CD4-positive, alpha-beta T cell (primary cell): ENCODE measurements at regions of chr11 and their contacts with region 1.

Region 1: GRCh38 chr11:13462901-13463778 is at the start of gene BTBD10:
- DNase-seq: peak; percentile 84 to 98 (median 90)
- ATAC-seq: peak; percentile 98
- H3K4me3 ChIP-seq: peak within 1 kb of the TSS; percentile 77
- H3K4me3 Mint-ChIP-seq: peak within 1 kb of the TSS; percentile 100
- H3K27ac ChIP-seq: peak within 1 kb of the TSS; percentile 82 to 92
- H3K27ac Mint-ChIP-seq: peak within 1 kb of the TSS; percentile 99
- H3K4me1 ChIP-seq: peaks cover 15% of the 10 kb centered on the region
- H3K4me1 Mint-ChIP-seq: peaks cover 54% of the 10 kb centered on the region
- H3K27me3 ChIP-seq: no peaks in the 10 kb centered on the region
- H3K27me3 Mint-ChIP-seq: no peaks in the 10 kb centered on the region
- CTCF ChIP-seq: no peak
- total RNA-seq, gene BTBD10: 13.3 to 14.8 TPM

Region 2: DNA sequence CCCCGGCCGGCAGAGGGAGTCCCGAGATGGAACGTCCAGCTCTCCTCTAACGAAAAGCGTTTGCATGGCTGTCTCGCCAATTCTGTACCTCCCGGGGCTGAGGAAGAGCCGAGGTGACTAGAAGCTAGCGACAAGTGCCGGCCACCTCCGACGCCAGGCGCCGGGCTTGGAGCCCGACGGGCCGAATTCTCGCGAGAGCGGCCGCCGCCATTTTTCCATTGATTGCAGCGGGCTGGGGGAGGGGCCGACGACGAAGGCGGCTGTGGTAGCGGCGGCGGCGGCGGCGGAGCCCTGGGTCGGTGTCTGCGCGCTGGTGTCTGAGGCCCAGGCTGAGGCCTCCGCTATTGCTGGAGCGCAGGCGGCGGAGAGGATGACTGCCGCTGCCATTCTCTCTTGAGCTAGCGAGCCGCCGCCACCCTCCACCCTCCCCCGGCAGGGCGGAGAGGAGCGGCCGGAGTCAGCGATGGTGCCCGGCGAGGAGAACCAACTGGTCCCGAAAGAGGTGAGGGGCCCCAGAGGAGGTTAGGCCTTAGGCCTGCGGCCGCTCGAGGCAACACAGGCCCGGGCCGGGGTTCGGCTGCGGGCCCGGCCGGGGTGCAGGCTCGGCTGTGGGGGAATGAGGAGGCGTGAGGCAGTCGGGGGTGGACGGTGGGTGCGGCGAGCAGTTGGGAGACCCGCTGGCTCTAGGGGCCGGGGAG is 1621.3 kb before region 1 on chr11 and contains the start of gene USP47:
- CTCF ChIA-PET with region 1: no interaction called
- POLR2A ChIA-PET with region 1: no interaction called
- intact Hi-C with region 1: loop called in 1 of 2 experiments (anchors 10 kb)
- DNase-seq: peak; percentile 92 to 97 (median 94)
- ATAC-seq: peak; percentile 69
- H3K4me3 ChIP-seq: peak within 1 kb of the TSS; percentile 87
- H3K4me3 Mint-ChIP-seq: no peak within 1 kb of the TSS
- H3K27ac ChIP-seq: peak within 1 kb of the TSS; percentile 91 to 99
- H3K27ac Mint-ChIP-seq: no peak within 1 kb of the TSS
- H3K4me1 ChIP-seq: peaks cover 19% of the 10 kb centered on the region
- H3K4me1 Mint-ChIP-seq: peaks cover 3% of the 10 kb centered on the region
- H3K27me3 ChIP-seq: peaks cover 0 to 5% of the 10 kb centered on the region in 2 experiments
- H3K27me3 Mint-ChIP-seq: peaks cover 16% of the 10 kb centered on the region
- CTCF ChIP-seq: peak; percentile 62
- total RNA-seq, gene USP47: 97.0 to 100 TPM

Region 3: GRCh38 chr11:12755510-12756453 is 707.4 kb before region 1 on chr11:
- CTCF ChIA-PET with region 1: no interaction called
- POLR2A ChIA-PET with region 1: no interaction called
- intact Hi-C with region 1: no loop called
- DNase-seq: no peak
- ATAC-seq: no peak
- H3K4me3 ChIP-seq: no peak overlapping the region
- H3K4me3 Mint-ChIP-seq: no peak overlapping the region
- H3K27ac ChIP-seq: no peak overlapping the region
- H3K27ac Mint-ChIP-seq: no peak overlapping the region
- H3K4me1 ChIP-seq: no peaks in the 10 kb centered on the region
- H3K4me1 Mint-ChIP-seq: no peaks in the 10 kb centered on the region
- H3K27me3 ChIP-seq: no peaks in the 10 kb centered on the region
- H3K27me3 Mint-ChIP-seq: peaks cover 18% of the 10 kb centered on the region
- CTCF ChIP-seq: no peak

Region 4: GRCh38 chr11:13276832-13277767 is 186.0 kb before region 1 on chr11:
- CTCF ChIA-PET with region 1: no interaction called
- POLR2A ChIA-PET with region 1: interaction called, 8 read pairs
- intact Hi-C with region 1: loop called (anchors 1 to 2 kb)
- DNase-seq: peak; percentile 95 to 98 (median 97)
- ATAC-seq: peak; percentile 84
- H3K4me3 ChIP-seq: peak overlapping the region; percentile 98
- H3K4me3 Mint-ChIP-seq: peak overlapping the region; percentile 97
- H3K27ac ChIP-seq: peak overlapping the region; percentile 29 to 66
- H3K27ac Mint-ChIP-seq: peak overlapping the region; percentile 85
- H3K4me1 ChIP-seq: peaks cover 34% of the 10 kb centered on the region
- H3K4me1 Mint-ChIP-seq: peaks cover 49% of the 10 kb centered on the region
- H3K27me3 ChIP-seq: no peaks in the 10 kb centered on the region
- H3K27me3 Mint-ChIP-seq: no peaks in the 10 kb centered on the region
- CTCF ChIP-seq: no peak

Region 5: GRCh38 chr11:13354335-13354734 is 108.8 kb before region 1 on chr11:
- CTCF ChIA-PET with region 1: no interaction called
- POLR2A ChIA-PET with region 1: no interaction called
- intact Hi-C with region 1: no loop called
- DNase-seq: no peak
- ATAC-seq: no peak
- H3K4me3 ChIP-seq: no peak overlapping the region
- H3K4me3 Mint-ChIP-seq: no peak overlapping the region
- H3K27ac ChIP-seq: no peak overlapping the region
- H3K27ac Mint-ChIP-seq: no peak overlapping the region
- H3K4me1 ChIP-seq: peaks cover 3% of the 10 kb centered on the region
- H3K4me1 Mint-ChIP-seq: peaks cover 4% of the 10 kb centered on the region
- H3K27me3 ChIP-seq: no peaks in the 10 kb centered on the region
- H3K27me3 Mint-ChIP-seq: no peaks in the 10 kb centered on the region
- CTCF ChIP-seq: no peak

Region 6: GRCh38 chr11:13668102-13668956 is 205.2 kb after region 1 on chr11 and contains the start of gene FAR1:
- CTCF ChIA-PET with region 1: interaction called, 3 read pairs
- POLR2A ChIA-PET with region 1: interaction called, 8 read pairs
- intact Hi-C with region 1: loop called (anchors 2 to 10 kb)
- DNase-seq: peak; percentile 90 to 98 (median 94)
- ATAC-seq: peak; percentile 88
- H3K4me3 ChIP-seq: peak within 1 kb of the TSS; percentile 85
- H3K4me3 Mint-ChIP-seq: peak within 1 kb of the TSS; percentile 98
- H3K27ac ChIP-seq: peak within 1 kb of the TSS; percentile 33 to 47
- H3K27ac Mint-ChIP-seq: peak within 1 kb of the TSS; percentile 88
- H3K4me1 ChIP-seq: peaks cover 28% of the 10 kb centered on the region
- H3K4me1 Mint-ChIP-seq: peaks cover 51% of the 10 kb centered on the region
- H3K27me3 ChIP-seq: no peaks in the 10 kb centered on the region
- H3K27me3 Mint-ChIP-seq: peaks cover 8% of the 10 kb centered on the region
- CTCF ChIP-seq: peak; percentile 70
- total RNA-seq, gene FAR1: 28.4 to 29.0 TPM

Region 7: GRCh38 chr11:14029971-14030920 is 567.1 kb after region 1 on chr11:
- CTCF ChIA-PET with region 1: no interaction called
- POLR2A ChIA-PET with region 1: no interaction called
- intact Hi-C with region 1: no loop called
- DNase-seq: no peak
- ATAC-seq: no peak
- H3K4me3 ChIP-seq: no peak overlapping the region
- H3K4me3 Mint-ChIP-seq: no peak overlapping the region
- H3K27ac ChIP-seq: no peak overlapping the region
- H3K27ac Mint-ChIP-seq: no peak overlapping the region
- H3K4me1 ChIP-seq: no peaks in the 10 kb centered on the region
- H3K4me1 Mint-ChIP-seq: no peaks in the 10 kb centered on the region
- H3K27me3 ChIP-seq: no peaks in the 10 kb centered on the region
- H3K27me3 Mint-ChIP-seq: no peaks in the 10 kb centered on the region
- CTCF ChIP-seq: no peak

Region 8: DNA sequence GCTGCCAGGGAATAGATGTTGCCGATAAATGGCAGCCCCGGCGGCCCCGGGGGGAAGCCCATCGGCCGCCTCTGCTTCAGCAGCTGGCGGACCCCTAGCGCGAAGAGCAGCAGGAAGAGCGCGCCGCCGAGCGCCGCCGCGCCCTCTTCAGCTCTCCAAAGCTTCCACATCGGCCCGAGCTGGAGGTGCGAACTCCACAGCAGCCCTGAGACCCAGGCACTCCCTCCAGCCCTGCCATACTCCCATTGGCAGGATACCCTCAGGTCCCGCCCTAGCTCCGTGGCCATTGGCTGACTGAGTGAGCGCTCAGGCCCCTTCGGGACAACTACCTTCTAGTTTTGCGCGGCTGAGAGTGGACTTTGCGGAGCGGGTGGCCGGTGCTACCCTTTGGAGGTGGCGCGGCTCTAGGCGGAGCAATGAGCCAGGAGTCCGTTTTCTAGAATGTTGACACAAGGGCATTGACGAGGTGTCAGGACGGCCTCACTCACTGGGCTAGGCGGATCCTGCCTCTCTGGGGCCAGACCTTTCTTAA is 1429.0 kb after region 1 on chr11 and contains the start of gene CYP2R1:
- CTCF ChIA-PET with region 1: no interaction called
- POLR2A ChIA-PET with region 1: interaction called, 3 read pairs
- intact Hi-C with region 1: loop called in 1 of 2 experiments (anchors 10 kb)
- DNase-seq: peak; percentile 79 to 95 (median 86)
- ATAC-seq: peak; percentile 82
- H3K4me3 ChIP-seq: peak within 1 kb of the TSS; percentile 94
- H3K4me3 Mint-ChIP-seq: peak within 1 kb of the TSS; percentile 96
- H3K27ac ChIP-seq: peak within 1 kb of the TSS; percentile 81 to 88
- H3K27ac Mint-ChIP-seq: peak within 1 kb of the TSS; percentile 94
- H3K4me1 ChIP-seq: peaks cover 31% of the 10 kb centered on the region
- H3K4me1 Mint-ChIP-seq: peaks cover 35% of the 10 kb centered on the region
- H3K27me3 ChIP-seq: no peaks in the 10 kb centered on the region
- H3K27me3 Mint-ChIP-seq: no peaks in the 10 kb centered on the region
- CTCF ChIP-seq: no peak
- total RNA-seq, gene CYP2R1: 14.2 to 15.8 TPM